Mammary epithelial cell (primary cell): ENCODE measurements at regions of chr10 and their contacts with region 1.

Region 1: DNA sequence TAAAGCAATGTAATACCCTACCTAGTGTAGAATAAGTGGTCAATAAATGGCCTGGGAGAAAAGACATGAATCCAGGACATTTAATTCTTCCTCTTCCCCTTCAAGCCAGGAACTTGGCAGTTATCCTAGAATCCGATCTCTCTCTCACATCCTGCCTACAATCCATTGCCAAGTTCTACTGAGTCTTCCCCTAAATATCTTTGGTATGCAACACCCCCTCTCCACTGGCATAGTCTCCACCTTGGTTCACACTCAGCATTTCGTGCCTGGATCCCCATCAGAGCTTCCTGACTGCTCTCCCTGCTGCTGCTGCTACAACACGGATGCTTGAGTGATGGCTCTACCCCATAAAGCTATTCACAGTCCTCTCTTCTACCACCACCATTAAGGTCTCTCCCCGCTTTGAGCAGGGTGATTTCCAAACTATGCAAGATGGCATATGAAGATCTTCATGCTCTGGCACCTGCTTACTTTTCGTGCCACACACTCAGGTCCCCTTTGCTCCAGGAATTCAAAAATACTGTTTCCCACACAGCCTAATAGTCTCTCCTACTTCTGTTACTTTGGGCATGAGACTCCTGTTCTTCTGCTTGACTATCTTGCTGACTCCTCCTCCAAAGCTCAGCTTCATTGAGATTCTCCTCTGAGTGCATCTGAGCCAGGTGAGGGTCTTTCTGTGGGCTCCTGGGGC is 4.8 kb downstream of the ANK3 start:
- DNase-seq: peak; percentile 90
- H3K4me3 ChIP-seq: no peak overlapping the region
- H3K27ac ChIP-seq: peak overlapping the region; percentile 16
- H3K4me1 ChIP-seq: peaks cover 28% of the 10 kb centered on the region
- H3K27me3 ChIP-seq: no peaks in the 10 kb centered on the region
- CTCF ChIP-seq: no peak

Region 2: DNA sequence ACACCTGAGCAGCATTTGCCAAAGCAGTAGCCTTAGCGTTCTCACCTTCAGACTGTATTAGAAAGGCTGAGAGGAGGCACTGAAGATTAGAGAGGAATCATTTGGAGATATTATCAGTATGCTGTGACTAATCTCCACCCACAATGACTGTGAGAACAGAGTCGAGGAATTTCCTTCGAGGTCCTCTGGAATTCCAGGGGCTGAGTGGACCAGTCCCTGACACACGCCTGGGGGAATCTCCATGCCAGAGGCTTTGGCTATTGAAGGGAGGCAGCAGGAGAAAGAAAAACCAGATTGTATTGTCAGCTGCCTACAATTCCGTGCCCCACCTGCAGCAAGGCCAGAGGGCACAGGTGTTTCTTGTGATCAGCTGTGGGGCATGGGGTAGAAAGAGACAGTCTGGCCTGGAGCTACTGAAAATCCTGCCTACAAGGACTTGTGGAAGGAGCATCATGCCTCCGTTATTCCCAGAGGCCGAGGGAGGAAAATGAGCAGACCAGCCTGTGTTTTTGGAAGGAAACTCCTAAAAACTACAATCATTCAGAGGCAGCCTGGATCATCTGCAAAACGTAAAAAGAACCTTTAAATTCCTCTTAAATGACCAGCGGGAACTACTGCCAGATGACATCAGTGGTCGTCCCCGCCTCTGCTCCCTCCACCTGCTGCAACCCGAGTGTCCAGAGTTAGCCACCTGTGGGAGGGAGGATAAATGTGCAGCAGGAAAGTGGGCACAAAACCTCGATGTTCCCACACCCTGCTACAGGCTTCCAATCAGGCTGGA is 30.1 kb after region 1 on chr10:
- CTCF ChIA-PET with region 1: no interaction called
- dilution Hi-C with region 1: no loop called
- in situ Hi-C with region 1: no loop called
- intact Hi-C with region 1: loop called (anchors 1 kb)
- DNase-seq: peak; percentile 95
- H3K4me3 ChIP-seq: no peak overlapping the region
- H3K27ac ChIP-seq: no peak overlapping the region
- H3K4me1 ChIP-seq: peaks cover 37% of the 10 kb centered on the region
- H3K27me3 ChIP-seq: no peaks in the 10 kb centered on the region
- CTCF ChIP-seq: no peak